HCT116 (cell line): ENCODE measurements at regions of chr4 and their contacts with region 1.

Region 1: GRCh38 chr4:111475001-111475400 is 670.3 kb upstream of the FAM241A start:
- DNase-seq: peak; percentile 38
- ATAC-seq: peak; percentile 70
- H3K4me3 ChIP-seq: no peak overlapping the region
- H3K27ac ChIP-seq: no peak overlapping the region
- H3K4me1 ChIP-seq: no peaks in the 10 kb centered on the region
- H3K27me3 ChIP-seq: no peaks in the 10 kb centered on the region
- CTCF ChIP-seq: peak; percentile 53 to 60 (median 54); a peak in 5 of 6 replicates
- POLR2A ChIP-seq: no peak
- RAD21 ChIP-seq: peak; percentile 72

Region 2: DNA sequence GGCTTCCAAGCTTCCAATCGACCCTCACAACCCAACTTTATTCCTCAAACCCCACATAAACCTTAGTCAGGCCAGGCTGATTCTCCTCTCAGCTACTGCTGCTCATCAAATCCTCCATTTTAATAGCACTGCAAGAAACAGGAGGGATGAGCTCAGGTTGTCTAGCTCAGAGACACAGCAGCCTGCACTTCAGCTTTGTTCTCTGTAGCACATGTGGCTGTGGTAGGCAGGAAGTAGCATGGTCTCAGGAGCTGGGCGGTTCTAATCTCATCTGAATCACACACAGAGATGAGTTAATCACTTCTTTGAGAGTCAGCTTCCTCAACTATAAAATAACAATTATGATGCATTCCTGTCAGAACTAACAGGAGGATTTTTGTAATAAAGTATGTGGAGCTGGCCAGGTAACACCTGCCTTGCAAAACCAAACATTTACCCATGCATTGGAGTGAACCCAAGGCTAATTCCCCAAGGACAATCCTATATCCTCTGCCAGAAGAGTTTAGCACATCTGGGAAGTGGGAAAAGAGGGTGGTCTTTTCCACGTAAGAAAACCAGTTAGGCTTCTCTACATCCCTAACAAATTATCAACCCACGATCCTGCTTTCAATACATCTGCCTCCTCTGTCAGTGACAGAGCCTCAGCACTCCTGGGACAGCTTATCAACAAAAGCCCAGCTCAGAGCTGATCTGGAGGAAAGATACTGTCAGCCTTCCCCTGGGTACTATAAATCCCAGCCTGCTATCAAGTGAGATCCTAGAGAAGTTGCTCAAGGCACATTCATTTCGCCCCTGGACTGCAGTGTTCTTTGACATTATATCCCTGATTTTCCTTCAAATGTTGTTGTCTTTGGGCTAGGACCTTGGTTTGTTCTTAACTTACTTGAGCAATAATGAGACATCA is 1309.4 kb before region 1 on chr4:
- CTCF ChIA-PET with region 1: no interaction called
- POLR2A ChIA-PET with region 1: no interaction called
- RAD21 ChIA-PET with region 1: no interaction called
- intact Hi-C with region 1: no loop called
- DNase-seq: peak; percentile 31
- ATAC-seq: peak; percentile 48; the same call in 1 of the 2 replicates
- H3K4me3 ChIP-seq: no peak overlapping the region
- H3K27ac ChIP-seq: peak overlapping the region; percentile 79; the same call in 1 of the 2 replicates
- H3K4me1 ChIP-seq: peaks cover 35 to 44% of the 10 kb centered on the region in 2 experiments
- H3K27me3 ChIP-seq: no peaks in the 10 kb centered on the region
- CTCF ChIP-seq: no peak
- POLR2A ChIP-seq: no peak
- RAD21 ChIP-seq: no peak

Region 3: GRCh38 chr4:111136438-111136837 is 338.6 kb before region 1 on chr4:
- CTCF ChIA-PET with region 1: interaction called, 3 read pairs
- POLR2A ChIA-PET with region 1: no interaction called
- RAD21 ChIA-PET with region 1: no interaction called
- intact Hi-C with region 1: loop called (anchors 1 kb)
- DNase-seq: peak; percentile 31
- ATAC-seq: peak; percentile 67; the same call in 1 of the 2 replicates
- H3K4me3 ChIP-seq: no peak overlapping the region
- H3K27ac ChIP-seq: no peak overlapping the region
- H3K4me1 ChIP-seq: no peaks in the 10 kb centered on the region
- H3K27me3 ChIP-seq: no peaks in the 10 kb centered on the region
- CTCF ChIP-seq: peak in 2 of 3 experiments; percentile 39 to 44; a peak in 3 of 6 replicates
- POLR2A ChIP-seq: no peak
- RAD21 ChIP-seq: peak; percentile 73

Region 4: GRCh38 chr4:111519683-111520082 is 44.7 kb after region 1 on chr4:
- CTCF ChIA-PET with region 1: no interaction called
- POLR2A ChIA-PET with region 1: no interaction called
- RAD21 ChIA-PET with region 1: no interaction called
- intact Hi-C with region 1: no loop called
- DNase-seq: no peak
- ATAC-seq: no peak
- H3K4me3 ChIP-seq: no peak overlapping the region
- H3K27ac ChIP-seq: no peak overlapping the region
- H3K4me1 ChIP-seq: no peaks in the 10 kb centered on the region
- H3K27me3 ChIP-seq: no peaks in the 10 kb centered on the region
- CTCF ChIP-seq: no peak
- POLR2A ChIP-seq: no peak
- RAD21 ChIP-seq: no peak